B cell (primary cell): ENCODE measurements at regions of chr3 and their contacts with region 1.

Region 1: DNA sequence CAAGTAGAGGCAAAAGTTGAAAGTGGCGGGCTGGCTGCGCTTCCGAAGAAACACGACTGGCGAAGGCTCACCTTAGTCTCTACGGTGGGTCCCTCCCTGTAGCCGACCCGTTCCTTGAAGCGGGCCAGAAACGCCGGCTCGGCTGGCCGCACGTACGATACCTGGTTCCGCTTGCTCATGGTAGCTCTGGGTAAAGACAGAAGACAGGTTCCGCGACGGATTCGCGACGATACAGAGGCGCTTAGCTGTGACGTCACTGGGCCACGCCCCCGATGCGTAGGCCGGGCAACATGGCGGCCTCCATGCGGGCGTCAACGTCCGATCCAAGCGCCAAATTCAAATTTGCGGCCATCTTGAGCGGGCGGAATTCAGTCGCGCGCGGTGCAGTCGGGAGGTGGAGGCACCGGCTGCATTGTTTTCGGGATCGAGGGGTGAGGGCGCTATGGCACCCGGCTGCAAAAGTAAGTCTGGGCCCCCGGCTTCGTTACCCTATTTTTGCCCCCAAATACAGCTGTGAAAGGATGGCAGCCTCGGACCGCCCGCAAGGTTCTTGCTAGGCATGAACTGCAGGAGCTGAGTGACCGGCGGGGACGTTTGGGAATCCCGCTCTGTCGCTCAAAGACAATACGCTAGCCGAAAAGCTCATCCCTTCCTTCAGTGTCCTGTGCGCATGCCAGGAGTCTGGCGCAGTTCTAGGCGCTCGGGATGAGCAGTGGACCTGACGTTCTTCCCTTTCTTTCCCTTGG is at the starts of genes KIAA1143 and KIF15:
- DNase-seq: peak; percentile 98
- ATAC-seq: peak; percentile 98
- H3K4me3 ChIP-seq: peak within 1 kb of the TSS; percentile 70 to 90 (median 88)
- H3K4me3 Mint-ChIP-seq: peak within 1 kb of the TSS; percentile 93
- H3K27ac ChIP-seq: peak within 1 kb of the TSS; percentile 65 to 91
- H3K27ac Mint-ChIP-seq: peak within 1 kb of the TSS; percentile 96
- H3K4me1 ChIP-seq: peaks cover 6 to 15% of the 10 kb centered on the region in 2 donors
- H3K4me1 Mint-ChIP-seq: peaks cover 24% of the 10 kb centered on the region
- H3K27me3 ChIP-seq: no peaks in the 10 kb centered on the region
- H3K27me3 Mint-ChIP-seq: no peaks in the 10 kb centered on the region
- CTCF ChIP-seq: no peak
- total RNA-seq, gene KIAA1143: 29.4 and 32.4 TPM in 2 replicates
- total RNA-seq, gene KIF15: 1.4 and 2.2 TPM in 2 replicates

Region 2: GRCh38 chr3:43621656-43622432 is 1139.8 kb before region 1 on chr3 and contains the start of gene ANO10:
- CTCF ChIA-PET with region 1: no interaction called
- POLR2A ChIA-PET with region 1: no interaction called
- intact Hi-C with region 1: loop called (anchors 5 kb)
- DNase-seq: peak; percentile 96
- ATAC-seq: peak; percentile 92
- H3K4me3 ChIP-seq: peak within 1 kb of the TSS; percentile 61 to 79 (median 72)
- H3K4me3 Mint-ChIP-seq: peak within 1 kb of the TSS; percentile 88
- H3K27ac ChIP-seq: peak within 1 kb of the TSS; percentile 2 to 28
- H3K27ac Mint-ChIP-seq: peak within 1 kb of the TSS; percentile 77
- H3K4me1 ChIP-seq: peaks cover 9 to 11% of the 10 kb centered on the region in 2 donors
- H3K4me1 Mint-ChIP-seq: peaks cover 12% of the 10 kb centered on the region
- H3K27me3 ChIP-seq: no peaks in the 10 kb centered on the region
- H3K27me3 Mint-ChIP-seq: peaks cover 4% of the 10 kb centered on the region
- CTCF ChIP-seq: no peak
- total RNA-seq, gene ANO10: 10.6 and 13.9 TPM in 2 replicates

Region 3: DNA sequence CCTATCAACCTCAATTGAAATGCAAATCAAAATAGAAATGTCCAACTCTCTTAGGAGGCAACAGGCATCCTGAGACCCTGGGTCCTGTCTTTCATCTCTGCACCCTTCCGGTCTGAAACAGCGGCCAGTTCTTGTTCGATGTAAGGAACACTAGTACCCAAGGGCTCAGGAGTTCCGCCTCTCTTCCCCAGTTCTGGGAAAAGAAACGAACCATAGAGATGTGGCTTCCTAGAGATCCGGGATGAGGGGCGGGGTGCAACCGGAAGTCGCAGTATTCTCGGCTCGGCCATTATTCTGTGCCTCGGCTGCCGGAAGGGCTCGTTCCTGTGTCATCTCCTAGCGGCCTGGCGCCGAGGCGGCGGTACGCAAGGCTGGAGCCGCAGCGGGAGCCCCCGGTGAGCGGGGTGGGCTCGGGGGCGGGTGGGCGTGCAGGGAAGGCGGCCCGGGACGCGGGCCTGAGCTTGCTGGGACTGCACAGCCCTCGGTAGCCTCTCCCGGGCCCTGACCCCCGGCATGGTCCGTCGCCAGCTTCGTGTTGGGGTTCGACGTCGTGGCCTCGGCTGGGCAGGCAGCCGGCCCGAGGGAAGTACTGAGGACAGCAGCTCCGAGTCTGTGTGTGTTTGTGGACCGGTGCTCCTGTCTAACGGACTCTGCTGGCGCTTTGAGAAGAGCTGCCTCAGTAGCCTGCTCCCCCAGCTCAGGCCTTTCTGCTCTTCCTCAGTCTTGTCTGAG is 136.7 kb before region 1 on chr3 and contains the start of gene ZNF197:
- CTCF ChIA-PET with region 1: no interaction called
- POLR2A ChIA-PET with region 1: interaction called, 4 read pairs
- intact Hi-C with region 1: loop called (anchors 2 kb)
- DNase-seq: peak; percentile 64
- ATAC-seq: peak; percentile 88
- H3K4me3 ChIP-seq: peak within 1 kb of the TSS; percentile 70 to 93 (median 80)
- H3K4me3 Mint-ChIP-seq: peak within 1 kb of the TSS; percentile 92
- H3K27ac ChIP-seq: peak within 1 kb of the TSS; percentile 51 to 73
- H3K27ac Mint-ChIP-seq: peak within 1 kb of the TSS; percentile 80
- H3K4me1 ChIP-seq: peaks cover 13 to 16% of the 10 kb centered on the region in 2 donors
- H3K4me1 Mint-ChIP-seq: peaks cover 27% of the 10 kb centered on the region
- H3K27me3 ChIP-seq: no peaks in the 10 kb centered on the region
- H3K27me3 Mint-ChIP-seq: no peaks in the 10 kb centered on the region
- CTCF ChIP-seq: no peak
- total RNA-seq, gene ZNF197: 16.9 and 17.7 TPM in 2 replicates

Region 4: DNA sequence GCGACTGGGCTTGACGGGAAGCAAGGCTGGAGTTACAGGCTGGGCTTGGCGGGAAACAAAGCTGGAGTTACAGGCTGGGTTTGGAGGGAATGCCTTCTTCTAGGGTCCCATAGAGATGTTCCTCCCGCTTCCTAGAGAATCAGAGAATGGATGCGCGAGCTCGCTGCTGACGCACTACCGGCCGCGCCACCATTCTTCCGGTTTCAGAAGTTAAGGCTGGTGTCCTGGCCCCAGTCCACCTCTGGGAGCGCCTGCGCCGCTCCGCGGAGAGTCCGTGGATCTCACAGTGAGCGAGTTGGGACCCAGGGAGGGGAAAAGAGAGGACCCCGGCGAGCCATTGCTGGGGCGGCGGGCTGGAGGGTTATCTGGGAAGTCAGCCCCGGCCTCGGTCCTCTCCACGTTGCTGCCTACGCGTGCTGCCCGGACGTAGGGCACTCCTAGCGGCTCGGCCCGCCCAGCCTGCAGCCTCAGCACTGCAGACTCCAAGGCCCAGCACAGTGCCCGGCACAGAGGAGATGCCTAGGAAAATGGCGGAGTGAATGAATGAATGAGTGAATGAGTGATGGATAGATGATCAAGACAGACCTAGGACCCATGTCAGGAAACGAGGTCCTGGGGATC is 49.0 kb before region 1 on chr3 and contains the start of gene ZNF502:
- CTCF ChIA-PET with region 1: interaction called, 4 read pairs
- POLR2A ChIA-PET with region 1: no interaction called
- intact Hi-C with region 1: loop called (anchors 1 kb)
- DNase-seq: peak; percentile 79
- ATAC-seq: peak; percentile 84
- H3K4me3 ChIP-seq: peak within 1 kb of the TSS; percentile 67 to 75 (median 71)
- H3K4me3 Mint-ChIP-seq: peak within 1 kb of the TSS; percentile 91
- H3K27ac ChIP-seq: peak within 1 kb of the TSS; percentile 38 to 44
- H3K27ac Mint-ChIP-seq: peak within 1 kb of the TSS; percentile 73
- H3K4me1 ChIP-seq: peaks cover 3 to 16% of the 10 kb centered on the region in 2 donors
- H3K4me1 Mint-ChIP-seq: peaks cover 15% of the 10 kb centered on the region
- H3K27me3 ChIP-seq: peaks cover 0 to 11% (median 3%) of the 10 kb centered on the region in 4 experiments
- H3K27me3 Mint-ChIP-seq: peaks cover 20% of the 10 kb centered on the region
- CTCF ChIP-seq: no peak
- total RNA-seq, gene ZNF502: 5.4 and 5.5 TPM in 2 replicates

Region 5: DNA sequence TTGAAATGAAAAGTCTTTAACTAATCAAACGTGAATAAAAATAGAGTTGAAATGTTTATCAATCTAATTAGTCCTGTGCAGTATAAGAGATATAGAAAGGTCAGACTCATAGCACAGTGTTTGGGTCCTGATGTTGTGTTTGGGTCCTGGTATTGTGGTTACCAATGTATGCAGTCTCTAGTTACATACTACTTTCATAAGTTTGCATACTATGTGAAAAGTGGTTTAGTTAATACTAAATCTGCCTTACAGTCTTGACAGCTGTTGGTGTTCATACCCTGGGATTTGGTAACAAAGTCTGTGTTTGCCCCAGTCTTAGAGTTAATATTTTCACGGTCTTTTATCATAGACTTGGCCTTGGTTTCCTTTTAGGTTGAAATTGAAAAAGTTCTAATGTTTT is 41.7 kb after region 1 on chr3:
- CTCF ChIA-PET with region 1: no interaction called
- POLR2A ChIA-PET with region 1: no interaction called
- intact Hi-C with region 1: no loop called
- DNase-seq: no peak
- ATAC-seq: no peak
- H3K4me3 ChIP-seq: no peak overlapping the region
- H3K4me3 Mint-ChIP-seq: no peak overlapping the region
- H3K27ac ChIP-seq: no peak overlapping the region
- H3K27ac Mint-ChIP-seq: no peak overlapping the region
- H3K4me1 ChIP-seq: no peaks in the 10 kb centered on the region
- H3K4me1 Mint-ChIP-seq: no peaks in the 10 kb centered on the region
- H3K27me3 ChIP-seq: no peaks in the 10 kb centered on the region
- H3K27me3 Mint-ChIP-seq: no peaks in the 10 kb centered on the region
- CTCF ChIP-seq: no peak

Region 6: GRCh38 chr3:44861412-44862220 is 100.0 kb after region 1 on chr3 and contains the start of gene TMEM42:
- CTCF ChIA-PET with region 1: no interaction called
- POLR2A ChIA-PET with region 1: no interaction called
- intact Hi-C with region 1: loop called (anchors 1 kb)
- DNase-seq: peak; percentile 95
- ATAC-seq: peak; percentile 93
- H3K4me3 ChIP-seq: peak within 1 kb of the TSS; percentile 60 to 93 (median 70)
- H3K4me3 Mint-ChIP-seq: peak within 1 kb of the TSS; percentile 91
- H3K27ac ChIP-seq: peak within 1 kb of the TSS; percentile 85 to 88
- H3K27ac Mint-ChIP-seq: peak within 1 kb of the TSS; percentile 91
- H3K4me1 ChIP-seq: peaks cover 7 to 13% of the 10 kb centered on the region in 2 donors
- H3K4me1 Mint-ChIP-seq: peaks cover 23% of the 10 kb centered on the region
- H3K27me3 ChIP-seq: no peaks in the 10 kb centered on the region
- H3K27me3 Mint-ChIP-seq: no peaks in the 10 kb centered on the region
- CTCF ChIP-seq: no peak
- total RNA-seq, gene TMEM42: 22.6 and 22.7 TPM in 2 replicates